Panc1 (cell line): ENCODE measurements at regions of chr4 and their contacts with region 1.

Region 1: GRCh38 chr4:118968005-118968404 is 79.4 kb downstream of the SYNPO2 start:
- DNase-seq: no peak
- ATAC-seq: peak; percentile 60; the same call in 1 of the 2 replicates
- H3K4me3 ChIP-seq: no peak overlapping the region
- H3K27ac ChIP-seq: no peak overlapping the region
- H3K4me1 ChIP-seq: no peaks in the 10 kb centered on the region
- H3K27me3 ChIP-seq: no peaks in the 10 kb centered on the region
- CTCF ChIP-seq: no peak

Region 2: DNA sequence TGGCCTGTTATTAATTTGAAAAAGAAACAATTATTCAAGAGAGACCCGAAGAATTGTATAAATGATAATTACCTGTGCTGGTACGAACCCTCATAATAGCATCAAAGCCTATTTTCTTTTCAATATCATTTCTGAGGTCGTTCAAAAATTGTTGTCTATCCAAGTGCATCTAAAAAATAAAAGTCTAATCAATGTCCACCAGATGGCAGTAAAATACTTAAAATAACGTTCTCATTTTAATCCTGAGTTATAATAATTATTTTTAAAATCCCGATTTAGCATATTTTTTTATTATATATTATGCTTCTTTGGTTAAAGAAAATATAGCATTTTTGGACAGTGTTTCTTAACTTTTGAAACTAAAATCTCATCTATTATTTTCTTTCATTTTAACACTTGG is 227.1 kb before region 1 on chr4:
- CTCF ChIA-PET with region 1: no interaction called
- POLR2A ChIA-PET with region 1: no interaction called
- in situ Hi-C with region 1: no loop called
- intact Hi-C with region 1: loop called (anchors 5 kb)
- DNase-seq: no peak
- ATAC-seq: no peak
- H3K4me3 ChIP-seq: no peak overlapping the region
- H3K27ac ChIP-seq: no peak overlapping the region
- H3K4me1 ChIP-seq: no peaks in the 10 kb centered on the region
- H3K27me3 ChIP-seq: no peaks in the 10 kb centered on the region
- CTCF ChIP-seq: peak; percentile 30; the same call in 1 of the 2 replicates

Region 3: DNA sequence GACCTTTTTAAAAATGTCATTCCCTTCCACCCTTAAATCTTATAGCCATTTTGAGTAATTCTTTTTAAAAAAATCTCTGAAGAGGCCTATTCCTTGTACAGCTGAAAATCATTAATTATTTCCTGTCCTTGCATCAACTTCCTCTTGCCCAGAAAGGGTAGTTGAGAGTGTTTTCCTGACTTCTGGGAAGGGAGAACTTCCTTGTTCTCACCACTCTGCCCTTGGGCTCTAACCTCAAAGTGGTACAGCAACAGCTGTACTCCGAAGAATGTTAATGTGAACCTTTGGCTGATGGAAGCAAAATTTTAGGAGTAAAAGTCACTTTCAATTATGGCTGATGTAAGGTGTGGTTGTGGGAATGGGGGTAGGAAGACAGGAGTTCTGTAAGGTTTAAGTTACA is 369.0 kb after region 1 on chr4:
- CTCF ChIA-PET with region 1: no interaction called
- POLR2A ChIA-PET with region 1: no interaction called
- in situ Hi-C with region 1: no loop called
- intact Hi-C with region 1: no loop called
- DNase-seq: no peak
- ATAC-seq: no peak
- H3K4me3 ChIP-seq: no peak overlapping the region
- H3K27ac ChIP-seq: no peak overlapping the region
- H3K4me1 ChIP-seq: no peaks in the 10 kb centered on the region
- H3K27me3 ChIP-seq: no peaks in the 10 kb centered on the region
- CTCF ChIP-seq: no peak